Activated naive CD8-positive, alpha-beta T cell treated with anti-CD3 and anti-CD28 coated beads, Interleukin-2, amount 10 ng/mL, durations not matched to agents 7 days and 5 days (primary cell): ENCODE measurements at regions of chr7 and their contacts with region 1.

Region 1: GRCh38 chr7:149195180-149196150 is at the start of gene ZNF282:
- DNase-seq: peak; percentile 81
- ATAC-seq: peak; percentile 89
- H3K4me3 Mint-ChIP-seq: peak within 1 kb of the TSS; percentile 90
- H3K27ac Mint-ChIP-seq: peak within 1 kb of the TSS; percentile 88
- H3K4me1 Mint-ChIP-seq: peaks cover 28% of the 10 kb centered on the region
- H3K27me3 Mint-ChIP-seq: peaks cover 9% of the 10 kb centered on the region
- total RNA-seq, gene ZNF282: 24.7 to 26.2 TPM

Region 2: DNA sequence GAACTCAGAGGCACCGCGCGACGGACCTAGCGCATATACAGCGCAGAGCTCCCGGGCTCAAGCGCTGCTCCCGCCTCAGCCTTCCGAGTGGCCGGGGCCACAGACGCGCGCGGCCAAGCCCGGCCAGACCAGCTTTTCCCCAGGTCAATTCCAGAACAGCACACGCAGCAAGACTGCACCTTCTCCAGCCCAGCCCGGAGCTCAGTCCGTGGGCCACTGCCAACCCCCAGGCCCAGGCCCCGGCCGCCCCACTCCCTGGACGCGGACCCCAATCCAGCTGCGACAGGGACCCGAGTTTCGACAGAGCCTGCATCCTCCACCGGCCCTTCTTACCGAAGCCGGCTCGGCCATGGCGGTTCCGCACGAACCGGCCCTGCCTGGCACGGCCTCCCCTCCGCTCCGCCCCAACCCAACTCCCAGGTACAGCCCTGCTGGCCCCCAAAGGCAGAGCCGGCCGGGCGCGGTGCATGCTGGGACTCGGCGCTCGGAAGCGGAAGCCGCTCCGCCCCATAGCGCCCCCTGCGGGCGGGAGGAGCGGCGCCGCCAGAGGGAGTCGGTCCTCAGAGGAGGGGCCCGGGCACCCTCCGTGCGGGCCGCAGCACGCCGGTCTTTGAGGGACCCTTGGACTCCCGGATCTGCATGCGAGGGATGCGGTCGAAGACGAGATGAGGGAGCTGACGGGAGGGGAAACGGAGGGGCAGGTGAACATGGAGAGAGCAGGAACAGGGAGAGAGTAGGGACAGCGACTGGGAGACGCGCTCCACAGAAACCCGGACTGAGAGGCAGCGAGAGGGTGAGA is 69.4 kb before region 1 on chr7 and contains the start of gene ZNF425:
- POLR2A ChIA-PET with region 1: interaction called, 11 read pairs
- DNase-seq: peak; percentile 99
- ATAC-seq: peak; percentile 88
- H3K4me3 Mint-ChIP-seq: peak within 1 kb of the TSS; percentile 100
- H3K27ac Mint-ChIP-seq: peak within 1 kb of the TSS; percentile 100
- H3K4me1 Mint-ChIP-seq: peaks cover 20% of the 10 kb centered on the region
- H3K27me3 Mint-ChIP-seq: no peaks in the 10 kb centered on the region
- total RNA-seq, gene ZNF425: 1.0 to 1.4 TPM

Region 3: DNA sequence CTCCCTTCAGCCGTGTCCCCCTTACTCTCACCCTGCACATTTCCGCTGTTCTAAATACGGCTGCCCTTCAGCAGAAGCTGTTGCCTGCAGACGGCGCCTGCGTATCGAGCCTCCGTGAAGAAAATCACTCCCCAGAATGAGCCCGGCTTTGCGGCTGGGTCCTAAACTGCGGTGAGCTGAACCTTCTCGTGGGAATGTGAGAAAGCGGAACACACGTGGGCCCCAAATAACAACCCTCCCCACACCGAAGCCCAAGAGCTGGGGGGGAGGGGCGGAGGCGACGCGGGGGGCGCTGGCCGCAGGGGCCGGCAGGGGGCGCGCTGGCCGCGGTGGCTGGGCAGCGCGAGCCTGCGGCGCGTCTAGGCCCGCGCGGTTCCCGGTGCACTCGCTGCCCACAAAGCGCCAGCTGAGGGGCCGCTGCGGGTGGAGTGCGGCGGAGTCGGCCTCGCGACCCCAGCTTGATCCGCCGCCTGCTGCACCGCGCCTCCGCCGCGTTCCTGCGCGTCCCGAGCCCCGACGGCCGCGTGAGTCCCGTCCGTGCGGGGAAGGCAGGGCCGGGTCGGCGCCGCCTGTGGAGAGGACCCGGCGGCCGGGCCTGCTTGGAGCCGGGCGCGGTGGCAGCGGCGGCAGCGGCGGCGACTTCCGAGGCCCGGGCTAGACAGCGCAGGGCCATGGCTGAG is 48.3 kb before region 1 on chr7 and contains the start of gene ZNF398:
- POLR2A ChIA-PET with region 1: interaction called, 17 read pairs
- DNase-seq: peak; percentile 90
- ATAC-seq: peak; percentile 79
- H3K4me3 Mint-ChIP-seq: peak within 1 kb of the TSS; percentile 89
- H3K27ac Mint-ChIP-seq: peak within 1 kb of the TSS; percentile 92
- H3K4me1 Mint-ChIP-seq: peaks cover 15% of the 10 kb centered on the region
- H3K27me3 Mint-ChIP-seq: no peaks in the 10 kb centered on the region
- total RNA-seq, gene ZNF398: 15.0 to 15.6 TPM